OCI-LY7 (cell line): ENCODE measurements at regions of chr19 and their contacts with region 1.

Region 1: DNA sequence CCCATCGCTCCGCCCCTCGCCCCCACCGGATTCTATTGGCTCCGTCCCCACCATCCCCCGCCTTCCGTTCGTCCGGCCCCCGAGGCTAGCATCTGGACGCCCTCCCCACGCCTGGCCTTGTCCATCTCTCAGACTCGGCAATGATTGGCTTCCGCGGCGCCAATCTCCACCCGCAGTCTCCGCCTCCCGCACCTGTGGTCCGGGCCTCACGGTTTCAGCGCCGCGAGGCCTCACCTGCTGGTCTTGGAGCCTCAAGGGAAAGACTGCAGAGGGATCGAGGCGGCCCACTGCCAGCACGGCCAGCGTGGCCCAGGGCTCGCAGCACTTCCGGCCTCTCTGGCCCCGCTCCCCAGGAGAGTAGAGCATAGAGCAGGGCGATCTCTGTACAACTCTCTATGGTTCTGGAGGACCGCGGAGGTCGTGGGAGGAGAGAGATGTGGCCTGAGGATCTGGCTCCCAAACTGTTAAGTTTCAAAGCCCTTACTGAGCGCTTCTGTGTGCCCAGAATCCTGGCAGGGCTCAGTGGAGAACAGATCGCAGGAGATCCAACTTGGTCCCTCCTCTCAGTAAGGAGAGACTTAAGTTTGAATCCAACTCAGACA is at the start of gene ERCC1:
- DNase-seq: peak; percentile 96
- H3K4me3 ChIP-seq: peak within 1 kb of the TSS; percentile 82
- H3K27ac ChIP-seq: peak within 1 kb of the TSS; percentile 79
- H3K4me1 ChIP-seq: peaks cover 74% of the 10 kb centered on the region
- CTCF ChIP-seq: no peak
- total RNA-seq, gene ERCC1: 125 and 126 TPM in 2 replicates

Region 2: DNA sequence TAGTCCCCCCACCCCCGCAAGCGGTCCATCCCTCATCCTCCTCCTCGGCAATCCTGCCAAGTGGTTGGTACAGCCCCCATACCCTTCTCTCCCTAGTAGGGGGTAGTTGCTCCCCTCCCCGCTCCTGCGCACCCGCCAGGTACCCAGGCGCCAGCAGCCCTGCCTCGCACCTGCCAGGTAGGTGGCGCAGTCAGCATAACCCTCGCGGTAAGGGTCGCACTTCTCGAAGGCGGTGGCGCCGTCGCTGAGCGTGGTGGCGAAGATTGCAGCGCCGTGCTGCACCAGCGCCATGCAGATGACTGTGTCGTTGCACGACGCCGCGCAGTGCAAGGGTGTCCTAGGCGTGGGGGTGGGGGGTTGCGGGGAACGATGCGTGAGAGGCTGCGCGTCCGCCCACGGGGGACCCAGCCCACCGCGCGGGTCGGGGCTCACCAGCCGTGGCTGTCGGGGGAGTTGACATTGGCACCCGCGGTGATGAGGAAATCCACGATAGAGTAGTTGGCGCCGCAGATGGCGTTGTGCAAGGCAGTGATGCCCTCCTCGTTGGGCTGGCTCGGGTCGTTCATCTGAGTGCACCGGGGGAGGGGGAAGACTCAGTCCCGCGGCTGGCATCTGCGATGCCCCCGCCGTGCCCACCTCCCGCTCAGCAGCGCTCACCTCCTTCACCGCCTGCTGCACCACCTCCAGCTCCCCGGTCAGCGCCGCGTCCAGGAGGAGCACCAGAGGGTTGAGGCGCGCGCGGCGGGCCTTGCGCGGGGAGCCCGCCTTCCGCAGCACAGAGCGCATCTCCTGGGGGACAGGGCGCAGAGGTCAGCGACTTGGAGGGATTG is 38.1 kb before region 1 on chr19:
- CTCF ChIA-PET with region 1: no interaction called
- POLR2A ChIA-PET with region 1: no interaction called
- intact Hi-C with region 1: no loop called
- DNase-seq: no peak
- H3K4me3 ChIP-seq: no peak overlapping the region
- H3K27ac ChIP-seq: no peak overlapping the region
- H3K4me1 ChIP-seq: no peaks in the 10 kb centered on the region
- CTCF ChIP-seq: no peak

Region 3: DNA sequence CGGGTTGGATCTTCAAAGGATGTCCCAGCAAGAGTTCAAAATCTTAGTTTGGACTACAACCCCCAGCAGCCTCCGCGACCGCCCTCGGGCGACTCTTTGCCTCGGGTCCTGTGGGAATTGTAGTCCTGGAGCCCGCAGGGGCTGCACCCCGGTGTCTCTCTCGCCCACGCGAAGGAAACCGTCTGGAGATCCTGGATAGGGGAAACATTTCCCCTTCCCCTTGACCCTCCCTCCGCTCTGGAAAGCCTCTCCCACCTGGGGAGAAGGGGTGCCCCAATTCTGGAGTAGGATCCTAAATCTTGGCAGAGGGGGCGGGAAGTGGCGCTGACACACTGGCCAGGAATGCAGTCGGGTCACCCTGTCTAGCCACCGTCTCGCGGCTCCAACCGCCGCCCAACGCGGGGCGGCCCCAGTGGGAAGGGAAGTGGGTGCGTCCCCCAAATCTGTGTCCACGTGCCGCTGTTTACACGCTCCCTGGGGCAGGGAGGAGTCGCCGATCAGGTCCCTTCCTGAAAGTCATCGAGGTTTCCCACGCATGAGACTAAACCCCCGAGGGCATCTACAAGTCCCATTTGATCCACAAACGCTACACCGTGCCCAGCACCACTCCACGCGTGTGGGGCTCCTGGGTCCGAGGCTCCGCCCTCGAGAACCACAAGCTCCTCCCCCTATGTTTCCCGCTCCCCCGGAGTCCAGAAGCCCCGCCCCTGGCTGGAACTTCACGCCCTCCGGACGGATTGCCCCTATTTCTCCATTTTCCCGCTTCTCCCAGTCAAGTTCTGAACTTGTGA is 18.1 kb before region 1 on chr19:
- CTCF ChIA-PET with region 1: interaction called, 3 read pairs
- POLR2A ChIA-PET with region 1: no interaction called
- intact Hi-C with region 1: loop called (anchors 1 kb)
- DNase-seq: peak; percentile 94
- H3K4me3 ChIP-seq: peak overlapping the region; percentile 89
- H3K27ac ChIP-seq: peak overlapping the region; percentile 69
- H3K4me1 ChIP-seq: peaks cover 38% of the 10 kb centered on the region
- CTCF ChIP-seq: no peak

Region 4: DNA sequence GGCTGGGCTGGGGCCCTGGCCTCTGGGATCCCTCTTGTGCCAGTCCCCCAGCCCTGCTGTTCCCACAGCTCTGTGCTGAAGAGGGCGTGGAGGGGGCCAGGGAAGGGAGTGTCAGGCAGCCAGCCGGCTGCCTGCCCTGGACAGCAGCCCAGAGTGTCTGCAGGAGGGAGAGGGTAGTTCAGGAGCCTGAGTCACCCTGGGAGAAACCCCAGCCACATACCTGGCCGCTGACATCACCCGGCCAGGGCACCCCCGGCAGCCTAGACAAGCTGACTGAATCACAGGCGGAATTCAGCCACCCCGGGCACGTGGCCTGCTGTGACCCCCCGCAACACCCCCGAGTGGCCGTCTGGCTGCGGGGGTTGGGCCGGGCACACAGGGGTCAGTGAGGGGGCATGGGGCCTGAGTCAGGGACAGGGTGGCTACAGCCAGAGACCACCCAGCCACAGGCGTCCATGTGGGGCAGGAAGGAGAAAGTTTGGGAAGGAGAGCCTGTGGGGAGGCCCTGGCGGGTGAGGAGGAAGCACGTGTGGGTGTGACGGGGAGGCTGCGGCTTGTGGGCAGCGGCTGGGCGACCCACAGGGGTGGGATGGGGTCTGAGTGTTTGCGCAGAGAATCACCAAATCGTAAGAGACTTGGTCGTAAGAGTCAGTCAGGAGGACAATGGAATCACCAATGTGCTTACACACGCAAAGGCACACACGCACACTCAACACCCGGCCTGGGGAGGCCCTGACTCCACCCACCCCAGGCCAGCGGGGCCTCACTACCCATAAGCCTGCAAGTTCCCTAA is 32.2 kb after region 1 on chr19:
- CTCF ChIA-PET with region 1: no interaction called
- POLR2A ChIA-PET with region 1: no interaction called
- intact Hi-C with region 1: no loop called
- DNase-seq: no peak
- H3K4me3 ChIP-seq: no peak overlapping the region
- H3K27ac ChIP-seq: no peak overlapping the region
- H3K4me1 ChIP-seq: peaks cover 62% of the 10 kb centered on the region
- CTCF ChIP-seq: no peak